ENCODE measurements at regions of chr22 and their contacts with region 1.

Region 1: DNA sequence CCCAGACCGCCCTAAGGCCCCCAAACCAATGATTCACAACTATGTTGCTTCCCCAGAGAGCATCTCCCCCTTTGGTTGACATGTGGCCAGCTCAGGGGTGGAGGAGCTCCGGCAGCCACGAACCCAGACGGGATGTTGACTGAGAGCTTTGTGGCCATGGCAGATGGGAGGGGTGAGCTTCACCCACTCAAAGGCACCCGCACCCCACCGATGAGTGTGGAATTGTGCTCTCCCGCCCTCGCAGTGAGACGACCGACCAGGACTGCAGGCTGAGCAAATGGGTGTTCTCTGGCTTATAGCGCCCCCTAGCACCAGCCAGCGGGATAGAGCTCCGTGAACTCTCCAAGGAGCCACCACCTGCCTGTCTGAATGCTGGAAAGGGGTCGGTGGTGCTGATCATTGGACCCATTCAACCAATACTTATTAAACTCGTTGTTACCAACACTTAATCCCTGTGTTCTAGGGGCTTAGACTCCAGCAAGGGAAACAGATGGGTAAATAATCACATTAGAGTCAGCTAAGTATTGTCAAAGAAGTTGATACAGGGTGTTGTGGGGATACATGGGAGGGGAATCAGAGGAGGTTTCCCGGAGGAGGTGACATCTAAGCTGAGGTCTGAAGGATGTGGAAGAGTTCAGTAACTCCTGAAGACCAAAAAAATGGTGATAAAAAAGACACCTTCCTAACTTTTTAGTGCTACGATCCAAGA is 4.5 kb upstream of the TIMP3 start:
- DNase-seq: peak; percentile 67 to 82 (median 76)
- ATAC-seq: peak; percentile 65 to 75 (median 72)
- H3K4me3 ChIP-seq: no peak overlapping the region
- H3K27ac ChIP-seq: no peak overlapping the region
- H3K4me1 ChIP-seq: peaks cover 0 to 4% (median 0%) of the 10 kb centered on the region in 4 donors
- H3K27me3 ChIP-seq: no peaks in the 10 kb centered on the region
- CTCF ChIP-seq: peak; percentile 81 to 94 (median 90)
- POLR2A ChIP-seq: no peak

Region 2: DNA sequence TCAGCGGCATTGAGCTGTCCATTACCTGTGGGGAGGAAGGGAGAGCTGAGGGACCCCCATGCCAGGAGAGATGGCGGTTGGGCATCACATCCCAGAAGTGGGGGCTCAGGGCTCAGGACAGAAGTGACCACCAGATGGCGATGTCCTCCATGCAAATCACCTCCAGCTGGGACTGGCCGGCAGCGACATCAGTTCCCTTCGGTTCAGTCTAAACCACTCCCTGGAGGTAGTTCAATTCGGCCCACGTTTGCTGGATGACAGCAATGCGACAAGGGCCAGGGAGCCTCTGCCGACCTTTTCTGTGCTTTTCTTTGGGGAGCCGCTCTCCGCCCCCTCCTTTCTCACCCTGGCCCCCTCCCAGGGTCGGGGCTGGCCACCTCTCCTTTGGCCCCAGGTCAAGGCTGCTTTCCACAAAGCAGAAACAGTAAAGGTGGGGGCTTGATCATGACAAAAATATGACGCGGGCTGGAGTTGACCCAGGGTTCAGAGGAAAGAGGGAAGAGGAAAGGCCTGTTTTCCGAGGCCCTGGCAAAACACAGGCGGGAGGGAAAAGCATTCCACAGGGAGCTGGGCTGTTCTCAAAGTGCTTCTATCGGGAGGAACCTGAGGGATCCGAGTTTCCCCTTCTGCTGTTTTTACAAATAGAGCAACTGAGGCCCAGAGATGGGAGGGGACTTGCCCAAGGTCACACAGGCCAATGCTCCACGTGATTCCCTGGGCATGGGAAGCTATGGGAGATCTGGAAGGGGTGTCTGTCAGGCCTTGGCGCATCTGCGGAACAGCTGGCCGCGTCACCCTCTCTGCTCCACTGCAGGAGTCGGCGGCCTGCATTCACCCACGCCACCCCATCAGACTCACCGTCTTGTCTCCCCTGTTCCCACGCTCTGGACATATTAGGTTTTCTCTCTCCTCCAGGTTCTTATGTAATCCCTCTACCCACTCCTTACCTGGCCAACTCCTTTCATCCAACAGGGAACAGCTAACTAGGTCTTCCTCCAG is 267.7 kb before region 1 on chr22:
- intact Hi-C with region 1: loop called in 1 of 2 experiments (anchors 5 kb)
- DNase-seq: peak; percentile 87 to 88 (median 88)
- ATAC-seq: peak; percentile 91 to 93 (median 92)
- H3K4me3 ChIP-seq: peak overlapping the region in 1 of 3 donors; percentile 32
- H3K27ac ChIP-seq: peak overlapping the region in 2 of 3 donors; percentile 50 to 51
- H3K4me1 ChIP-seq: peaks cover 0 to 24% (median 4%) of the 10 kb centered on the region in 4 donors
- H3K27me3 ChIP-seq: no peaks in the 10 kb centered on the region
- CTCF ChIP-seq: peak; percentile 85 to 94 (median 87)
- POLR2A ChIP-seq: no peak

Region 3: DNA sequence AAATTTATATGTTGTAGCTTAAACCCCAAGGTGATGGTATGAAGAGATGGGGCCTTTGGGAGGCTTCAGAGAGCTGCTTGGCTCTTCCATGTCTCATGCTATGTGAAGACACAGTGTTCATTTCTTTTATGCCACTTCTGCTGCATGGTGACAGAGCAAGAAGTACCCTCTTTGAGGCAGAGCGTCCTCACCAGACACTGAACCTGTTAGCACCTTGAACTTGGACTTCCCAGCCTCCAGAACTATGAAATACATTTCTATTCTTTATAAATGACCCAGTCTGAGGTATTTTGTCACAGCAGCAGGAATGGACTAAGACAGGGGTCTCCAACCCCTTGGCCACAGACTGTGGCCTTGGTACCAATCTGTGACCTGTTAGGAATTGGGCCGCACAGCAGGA is 142.0 kb before region 1 on chr22:
- intact Hi-C with region 1: loop called (anchors 2 to 5 kb)
- DNase-seq: no peak
- ATAC-seq: no peak
- H3K4me3 ChIP-seq: no peak overlapping the region
- H3K27ac ChIP-seq: no peak overlapping the region
- H3K4me1 ChIP-seq: no peaks in the 10 kb centered on the region
- H3K27me3 ChIP-seq: no peaks in the 10 kb centered on the region
- CTCF ChIP-seq: no peak
- POLR2A ChIP-seq: no peak

Region 4: GRCh38 chr22:32660292-32660691 is 136.7 kb before region 1 on chr22:
- intact Hi-C with region 1: loop called (anchors 2 to 5 kb)
- DNase-seq: peak; percentile 67 to 81 (median 77)
- ATAC-seq: peak; percentile 91 to 99 (median 97)
- H3K4me3 ChIP-seq: no peak overlapping the region
- H3K27ac ChIP-seq: no peak overlapping the region
- H3K4me1 ChIP-seq: no peaks in the 10 kb centered on the region
- H3K27me3 ChIP-seq: no peaks in the 10 kb centered on the region
- CTCF ChIP-seq: peak; percentile 73 to 91 (median 82)
- POLR2A ChIP-seq: no peak